B cell (primary cell): ENCODE measurements at regions of chr18 and their contacts with region 1.

Region 1: DNA sequence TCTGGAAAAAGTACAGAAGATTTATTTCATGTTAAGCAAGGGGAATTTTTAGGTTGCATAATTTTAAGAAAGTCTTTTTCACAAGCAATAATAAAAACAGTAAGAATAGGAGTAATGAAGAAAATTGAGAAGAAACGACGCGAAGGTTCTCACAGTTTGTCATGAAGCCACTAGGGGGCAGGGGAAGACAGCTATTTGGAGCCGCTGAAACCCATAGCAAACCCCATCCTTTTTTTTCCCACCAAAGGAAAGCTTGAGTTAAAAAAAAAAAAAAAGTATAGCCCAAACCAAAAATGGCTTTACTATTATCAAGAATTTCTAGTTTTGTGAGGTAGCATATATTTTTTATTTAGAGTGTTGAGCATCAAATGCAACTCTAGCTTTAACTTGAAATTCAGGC is 300.9 kb downstream of the PHLPP1 start:
- DNase-seq: peak; percentile 74
- ATAC-seq: peak; percentile 60
- H3K4me3 ChIP-seq: no peak overlapping the region
- H3K4me3 Mint-ChIP-seq: no peak overlapping the region
- H3K27ac ChIP-seq: no peak overlapping the region
- H3K27ac Mint-ChIP-seq: no peak overlapping the region
- H3K4me1 ChIP-seq: no peaks in the 10 kb centered on the region
- H3K4me1 Mint-ChIP-seq: no peaks in the 10 kb centered on the region
- H3K27me3 ChIP-seq: no peaks in the 10 kb centered on the region
- H3K27me3 Mint-ChIP-seq: peaks cover 21% of the 10 kb centered on the region
- CTCF ChIP-seq: peak; percentile 86

Region 2: GRCh38 chr18:61076986-61077385 is 1939.3 kb before region 1 on chr18:
- CTCF ChIA-PET with region 1: no interaction called
- POLR2A ChIA-PET with region 1: no interaction called
- intact Hi-C with region 1: no loop called
- DNase-seq: no peak
- ATAC-seq: no peak
- H3K4me3 ChIP-seq: no peak overlapping the region
- H3K4me3 Mint-ChIP-seq: no peak overlapping the region
- H3K27ac ChIP-seq: no peak overlapping the region
- H3K27ac Mint-ChIP-seq: no peak overlapping the region
- H3K4me1 ChIP-seq: no peaks in the 10 kb centered on the region
- H3K4me1 Mint-ChIP-seq: no peaks in the 10 kb centered on the region
- H3K27me3 ChIP-seq: no peaks in the 10 kb centered on the region
- H3K27me3 Mint-ChIP-seq: no peaks in the 10 kb centered on the region
- CTCF ChIP-seq: no peak

Region 3: DNA sequence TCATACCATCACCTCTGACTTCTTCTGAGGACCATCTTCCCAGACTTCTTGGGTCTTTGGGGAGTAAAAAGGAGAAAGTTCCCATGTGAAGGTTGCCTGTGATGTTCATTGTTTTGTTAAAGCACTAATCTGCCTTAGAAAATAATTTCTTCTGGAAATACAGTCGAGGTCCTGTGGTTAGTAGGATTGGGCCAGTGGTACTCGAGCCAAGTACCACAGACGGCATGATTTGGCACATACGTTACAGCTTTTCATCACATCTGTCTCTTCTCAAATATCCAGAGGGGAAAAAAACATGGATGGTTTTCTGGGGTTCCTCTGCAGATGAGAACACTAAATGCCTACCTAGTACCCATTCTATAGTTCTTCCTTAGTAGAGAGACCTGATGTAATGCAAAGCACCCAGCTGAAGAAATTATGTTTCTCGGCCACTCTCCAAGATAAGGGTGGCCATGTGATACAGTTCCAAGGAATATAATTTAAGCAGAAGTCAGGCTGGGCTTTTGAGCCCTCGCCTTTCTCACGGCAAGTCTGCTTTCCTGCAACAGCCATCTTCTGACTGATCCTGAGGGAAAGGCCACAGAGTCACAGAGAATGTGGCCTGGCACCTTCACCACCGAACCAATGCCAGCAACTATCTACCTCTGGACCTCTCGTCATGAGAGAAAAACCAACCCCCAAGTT is 1284.4 kb before region 1 on chr18:
- CTCF ChIA-PET with region 1: no interaction called
- POLR2A ChIA-PET with region 1: no interaction called
- intact Hi-C with region 1: no loop called
- DNase-seq: no peak
- ATAC-seq: no peak
- H3K4me3 ChIP-seq: no peak overlapping the region
- H3K4me3 Mint-ChIP-seq: no peak overlapping the region
- H3K27ac ChIP-seq: no peak overlapping the region
- H3K27ac Mint-ChIP-seq: no peak overlapping the region
- H3K4me1 ChIP-seq: no peaks in the 10 kb centered on the region
- H3K4me1 Mint-ChIP-seq: no peaks in the 10 kb centered on the region
- H3K27me3 ChIP-seq: no peaks in the 10 kb centered on the region
- H3K27me3 Mint-ChIP-seq: peaks cover 4% of the 10 kb centered on the region
- CTCF ChIP-seq: no peak

Region 4: DNA sequence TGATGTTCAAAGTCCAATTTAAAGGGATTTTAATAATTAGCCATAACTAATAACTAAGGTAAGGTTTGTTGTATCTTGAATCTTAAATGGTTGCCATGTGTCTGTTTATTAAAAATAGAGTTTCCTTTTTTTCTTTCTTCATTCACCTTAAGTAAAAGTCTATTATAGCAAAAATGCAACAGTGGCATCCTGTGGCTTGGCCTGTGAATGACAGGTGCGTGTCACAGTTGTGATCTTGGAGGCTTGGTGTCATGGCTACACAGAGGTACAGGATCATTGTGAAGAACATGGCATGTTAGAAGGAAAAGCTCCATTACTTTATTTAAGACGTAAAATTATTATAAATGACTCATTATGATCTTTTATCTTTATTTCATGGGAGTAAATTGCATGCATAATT is 57.2 kb after region 1 on chr18:
- CTCF ChIA-PET with region 1: interaction called, 11 read pairs
- POLR2A ChIA-PET with region 1: no interaction called
- intact Hi-C with region 1: loop called (anchors 1 kb)
- DNase-seq: peak; percentile 36
- ATAC-seq: peak; percentile 44
- H3K4me3 ChIP-seq: no peak overlapping the region
- H3K4me3 Mint-ChIP-seq: no peak overlapping the region
- H3K27ac ChIP-seq: no peak overlapping the region
- H3K27ac Mint-ChIP-seq: no peak overlapping the region
- H3K4me1 ChIP-seq: peaks cover 6 to 11% of the 10 kb centered on the region in 2 donors
- H3K4me1 Mint-ChIP-seq: peaks cover 17% of the 10 kb centered on the region
- H3K27me3 ChIP-seq: no peaks in the 10 kb centered on the region
- H3K27me3 Mint-ChIP-seq: peaks cover 3% of the 10 kb centered on the region
- CTCF ChIP-seq: peak; percentile 29

Region 5: DNA sequence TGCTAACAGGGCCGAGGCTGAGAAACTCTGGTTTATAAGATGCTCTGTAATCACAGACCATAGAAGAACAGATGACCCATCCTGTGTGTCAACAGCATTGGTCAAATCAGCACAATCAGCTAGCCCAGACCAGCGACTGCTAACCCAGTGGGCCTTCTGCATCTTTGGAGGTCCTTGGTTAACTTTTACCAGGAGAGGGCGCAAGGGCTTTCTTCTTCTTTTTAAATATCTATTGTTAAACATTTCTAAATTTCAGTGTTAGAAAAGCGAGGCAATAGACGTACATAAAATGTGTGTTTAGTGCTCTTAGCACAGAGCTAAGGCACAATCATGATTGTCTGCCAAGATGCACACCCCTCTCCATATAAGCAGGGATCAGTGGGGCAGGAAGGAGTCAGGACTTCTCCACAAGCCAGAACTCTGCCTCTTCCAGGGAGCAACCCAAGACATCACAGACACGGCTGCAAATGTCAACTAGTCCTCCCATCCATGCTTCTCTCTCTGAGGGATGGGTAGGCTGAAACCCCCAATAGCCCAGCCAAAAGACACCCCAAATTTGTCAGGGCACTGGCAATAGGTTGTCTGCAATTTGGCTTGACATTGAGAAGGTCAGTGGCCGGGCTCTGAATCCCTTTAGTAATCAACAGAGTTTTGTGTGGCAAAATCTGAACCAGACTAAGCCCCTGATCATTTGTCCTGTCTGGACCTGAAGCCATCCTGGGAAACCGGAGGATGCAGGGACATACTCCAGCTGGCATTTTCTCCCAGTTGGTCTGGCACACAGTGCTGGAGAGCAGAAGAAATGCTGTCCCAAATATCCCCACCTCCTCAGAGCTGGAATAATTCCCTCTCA is 115.1 kb after region 1 on chr18:
- CTCF ChIA-PET with region 1: interaction called, 41 read pairs
- POLR2A ChIA-PET with region 1: interaction called, 3 read pairs
- intact Hi-C with region 1: loop called (anchors 2 kb)
- DNase-seq: peak; percentile 79
- ATAC-seq: peak; percentile 69
- H3K4me3 ChIP-seq: no peak overlapping the region
- H3K4me3 Mint-ChIP-seq: no peak overlapping the region
- H3K27ac ChIP-seq: peak overlapping the region in 1 of 2 donors; percentile 22
- H3K27ac Mint-ChIP-seq: peak overlapping the region; percentile 86
- H3K4me1 ChIP-seq: peaks cover 4 to 8% of the 10 kb centered on the region in 2 donors
- H3K4me1 Mint-ChIP-seq: peaks cover 30% of the 10 kb centered on the region
- H3K27me3 ChIP-seq: no peaks in the 10 kb centered on the region
- H3K27me3 Mint-ChIP-seq: no peaks in the 10 kb centered on the region
- CTCF ChIP-seq: peak; percentile 80

Region 6: GRCh38 chr18:63155169-63155852 is 139.0 kb after region 1 on chr18:
- CTCF ChIA-PET with region 1: interaction called, 17 read pairs
- POLR2A ChIA-PET with region 1: no interaction called
- intact Hi-C with region 1: no loop called
- DNase-seq: peak; percentile 90
- ATAC-seq: peak; percentile 65
- H3K4me3 ChIP-seq: peak overlapping the region in 4 of 5 experiments; percentile 15 to 48 (median 34)
- H3K4me3 Mint-ChIP-seq: peak overlapping the region; percentile 80
- H3K27ac ChIP-seq: peak overlapping the region; percentile 57 to 89
- H3K27ac Mint-ChIP-seq: peak overlapping the region; percentile 96
- H3K4me1 ChIP-seq: peaks cover 69 to 70% of the 10 kb centered on the region in 2 donors
- H3K4me1 Mint-ChIP-seq: peaks cover 95% of the 10 kb centered on the region
- H3K27me3 ChIP-seq: no peaks in the 10 kb centered on the region
- H3K27me3 Mint-ChIP-seq: no peaks in the 10 kb centered on the region
- CTCF ChIP-seq: peak; percentile 84

Region 7: GRCh38 chr18:63199743-63200241 is 183.5 kb after region 1 on chr18:
- CTCF ChIA-PET with region 1: no interaction called
- POLR2A ChIA-PET with region 1: no interaction called
- intact Hi-C with region 1: no loop called
- DNase-seq: no peak
- ATAC-seq: peak; percentile 33
- H3K4me3 ChIP-seq: peak overlapping the region in 1 of 5 experiments; percentile 2
- H3K4me3 Mint-ChIP-seq: no peak overlapping the region
- H3K27ac ChIP-seq: peak overlapping the region in 1 of 2 donors; percentile 74
- H3K27ac Mint-ChIP-seq: no peak overlapping the region
- H3K4me1 ChIP-seq: peaks cover 44% of the 10 kb centered on the region in 2 donors
- H3K4me1 Mint-ChIP-seq: peaks cover 24% of the 10 kb centered on the region
- H3K27me3 ChIP-seq: no peaks in the 10 kb centered on the region
- H3K27me3 Mint-ChIP-seq: no peaks in the 10 kb centered on the region
- CTCF ChIP-seq: no peak

Region 8: GRCh38 chr18:63439334-63439733 is 423.1 kb after region 1 on chr18:
- CTCF ChIA-PET with region 1: interaction called, 170 read pairs
- POLR2A ChIA-PET with region 1: no interaction called
- intact Hi-C with region 1: loop called (anchors 1 kb)
- DNase-seq: peak; percentile 72
- ATAC-seq: peak; percentile 78
- H3K4me3 ChIP-seq: no peak overlapping the region
- H3K4me3 Mint-ChIP-seq: no peak overlapping the region
- H3K27ac ChIP-seq: no peak overlapping the region
- H3K27ac Mint-ChIP-seq: no peak overlapping the region
- H3K4me1 ChIP-seq: peaks cover 2 to 5% of the 10 kb centered on the region in 2 donors
- H3K4me1 Mint-ChIP-seq: peaks cover 5% of the 10 kb centered on the region
- H3K27me3 ChIP-seq: no peaks in the 10 kb centered on the region
- H3K27me3 Mint-ChIP-seq: peaks cover 16% of the 10 kb centered on the region
- CTCF ChIP-seq: peak; percentile 94

Region 9: DNA sequence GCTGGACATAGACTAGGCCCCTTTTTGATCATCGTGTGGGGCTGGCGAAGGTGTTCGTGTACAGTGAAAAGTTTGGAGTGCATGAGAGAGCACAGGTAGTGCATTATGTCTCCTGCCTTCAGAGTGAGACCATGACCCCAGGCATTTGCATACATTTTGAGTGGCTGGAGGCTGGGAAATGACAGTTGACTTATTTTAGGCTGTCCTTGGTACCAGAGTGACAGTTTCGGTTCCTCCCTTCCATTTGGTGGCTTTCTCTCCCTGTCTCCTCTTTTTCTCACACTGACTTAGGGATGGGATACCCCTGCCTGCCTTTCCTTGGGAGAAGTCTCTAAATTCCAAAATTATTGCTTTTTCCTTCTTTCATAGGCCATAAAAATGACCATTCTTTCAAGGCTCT is 546.0 kb after region 1 on chr18:
- CTCF ChIA-PET with region 1: no interaction called
- POLR2A ChIA-PET with region 1: no interaction called
- intact Hi-C with region 1: no loop called
- DNase-seq: no peak
- ATAC-seq: no peak
- H3K4me3 ChIP-seq: no peak overlapping the region
- H3K4me3 Mint-ChIP-seq: no peak overlapping the region
- H3K27ac ChIP-seq: no peak overlapping the region
- H3K27ac Mint-ChIP-seq: no peak overlapping the region
- H3K4me1 ChIP-seq: peaks cover 0 to 6% of the 10 kb centered on the region in 2 donors
- H3K4me1 Mint-ChIP-seq: peaks cover 15% of the 10 kb centered on the region
- H3K27me3 ChIP-seq: no peaks in the 10 kb centered on the region
- H3K27me3 Mint-ChIP-seq: no peaks in the 10 kb centered on the region
- CTCF ChIP-seq: no peak